Naive thymus-derived CD8-positive, alpha-beta T cell (primary cell): ENCODE measurements at regions of chr5 and their contacts with region 1.

Region 1: DNA sequence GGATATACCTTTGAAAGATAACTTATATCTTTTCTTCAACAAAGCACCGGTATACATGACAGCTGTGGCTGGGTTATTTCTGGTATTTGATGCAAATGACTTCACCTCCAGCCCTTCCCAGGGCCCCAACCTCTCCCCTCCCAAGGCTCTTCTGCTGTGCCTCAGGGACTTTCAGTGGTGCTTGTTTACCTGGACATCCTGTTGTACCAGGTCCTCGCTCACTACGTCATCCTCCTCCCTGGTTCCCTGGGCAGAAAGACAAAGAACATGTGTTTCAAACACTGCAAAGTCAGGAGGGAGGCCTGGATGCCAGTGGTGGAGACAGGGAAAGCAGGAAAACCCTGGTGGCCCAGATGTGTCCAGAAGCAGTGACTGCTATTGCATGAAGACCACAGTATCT is 23.3 kb downstream of the ANXA6 start:
- DNase-seq: no peak
- ATAC-seq: no peak
- H3K4me3 Mint-ChIP-seq: no peak overlapping the region
- H3K27ac Mint-ChIP-seq: peak overlapping the region; percentile 63 to 98 (median 86)
- H3K4me1 Mint-ChIP-seq: peaks cover 49 to 95% (median 89%) of the 10 kb centered on the region in 4 donors
- H3K27me3 Mint-ChIP-seq: no peaks in the 10 kb centered on the region

Region 2: GRCh38 chr5:151157426-151158286 is 23.4 kb after region 1 on chr5 and contains the start of gene ANXA6:
- POLR2A ChIA-PET with region 1: interaction called, 185 read pairs
- DNase-seq: peak; percentile 24 to 76 (median 60)
- ATAC-seq: peak; percentile 75 to 76
- H3K4me3 Mint-ChIP-seq: peak within 1 kb of the TSS; percentile 93 to 99 (median 95)
- H3K27ac Mint-ChIP-seq: peak within 1 kb of the TSS; percentile 94 to 99 (median 96)
- H3K4me1 Mint-ChIP-seq: peaks cover 38 to 69% (median 60%) of the 10 kb centered on the region in 4 donors
- H3K27me3 Mint-ChIP-seq: no peaks in the 10 kb centered on the region
- polyA plus RNA-seq, gene ANXA6: 242 to 318 (median 254) TPM

Region 3: DNA sequence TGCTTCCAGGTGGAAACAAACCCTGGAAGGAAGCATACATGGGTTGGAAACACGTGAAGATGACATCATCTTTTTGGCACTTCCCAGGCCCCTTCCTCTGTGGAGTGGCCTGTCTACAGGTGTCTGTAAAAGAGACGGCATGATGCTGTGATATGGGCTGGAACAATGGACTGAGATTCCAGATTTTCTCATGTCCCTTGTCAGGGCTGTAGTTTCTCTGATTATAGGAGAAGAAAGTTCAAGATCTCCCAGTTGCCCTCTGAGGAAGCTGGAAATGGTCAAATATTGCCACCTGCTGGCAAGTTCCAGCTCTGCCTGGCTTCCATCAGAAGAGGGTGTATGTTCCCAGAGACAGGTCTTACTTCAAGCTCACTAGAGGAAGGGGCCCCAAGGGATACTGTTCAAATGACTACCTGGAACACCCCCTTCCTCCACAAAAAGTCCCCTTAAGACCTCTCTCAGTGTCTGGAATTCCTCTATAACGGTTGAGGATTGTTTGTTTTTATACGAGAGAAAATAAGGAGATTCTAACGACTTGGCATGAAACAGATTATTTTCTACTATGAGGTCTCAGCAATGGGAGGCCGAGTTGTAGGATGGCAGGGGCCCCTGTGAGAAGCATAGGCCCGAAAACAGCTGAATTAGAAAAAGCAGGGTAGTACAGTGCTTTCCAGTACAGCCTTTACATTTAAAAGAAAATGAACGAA is 30.6 kb after region 1 on chr5:
- POLR2A ChIA-PET with region 1: interaction called, 10 read pairs
- DNase-seq: peak; percentile 56 to 90 (median 82)
- ATAC-seq: peak; percentile 94 to 99
- H3K4me3 Mint-ChIP-seq: peak overlapping the region in 2 of 10 donors; percentile 3 to 14
- H3K27ac Mint-ChIP-seq: peak overlapping the region; percentile 11 to 85 (median 66)
- H3K4me1 Mint-ChIP-seq: peaks cover 14 to 37% (median 33%) of the 10 kb centered on the region in 4 donors
- H3K27me3 Mint-ChIP-seq: no peaks in the 10 kb centered on the region